CD8-positive, alpha-beta T cell (primary cell): ENCODE measurements at regions of chr14 and their contacts with region 1.

Region 1: DNA sequence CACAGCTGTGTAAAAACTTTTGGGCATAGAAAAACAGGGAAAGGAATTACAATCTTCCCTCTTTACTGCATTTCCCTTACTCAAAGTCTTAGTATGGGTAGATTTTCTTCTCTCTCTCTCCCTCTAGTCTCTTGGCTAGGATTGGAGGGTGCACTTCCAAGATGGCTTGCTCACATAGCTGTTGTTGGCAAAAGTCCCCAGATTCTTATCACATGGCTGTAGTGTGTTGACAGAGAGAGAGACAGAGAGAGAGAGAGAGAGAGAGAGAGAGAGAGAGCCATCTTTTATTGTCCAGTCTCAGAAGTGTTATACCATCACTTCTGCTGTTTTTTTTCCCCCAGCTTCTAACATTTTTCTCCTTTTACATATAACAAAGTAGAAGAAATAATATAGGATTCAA is 6.3 kb upstream of the OR4E2 start:
- DNase-seq: no peak
- ATAC-seq: no peak
- H3K4me3 ChIP-seq: no peak overlapping the region
- H3K4me3 Mint-ChIP-seq: no peak overlapping the region
- H3K27ac ChIP-seq: no peak overlapping the region
- H3K27ac Mint-ChIP-seq: no peak overlapping the region
- H3K4me1 ChIP-seq: no peaks in the 10 kb centered on the region
- H3K4me1 Mint-ChIP-seq: no peaks in the 10 kb centered on the region
- H3K27me3 ChIP-seq: peaks cover 0 to 4% of the 10 kb centered on the region in 2 experiments
- H3K27me3 Mint-ChIP-seq: peaks cover 27% of the 10 kb centered on the region
- CTCF ChIP-seq: no peak

Region 2: GRCh38 chr14:21233457-21234076 is 413.8 kb before region 1 on chr14:
- CTCF ChIA-PET with region 1: no interaction called
- POLR2A ChIA-PET with region 1: no interaction called
- intact Hi-C with region 1: no loop called
- DNase-seq: peak in 2 of 9 experiments; percentile 46 to 57
- ATAC-seq: no peak
- H3K4me3 ChIP-seq: no peak overlapping the region
- H3K4me3 Mint-ChIP-seq: peak overlapping the region; percentile 63
- H3K27ac ChIP-seq: peak overlapping the region in 1 of 2 experiments; percentile 34
- H3K27ac Mint-ChIP-seq: peak overlapping the region; percentile 84
- H3K4me1 ChIP-seq: peaks cover 93% of the 10 kb centered on the region
- H3K4me1 Mint-ChIP-seq: peaks cover 88% of the 10 kb centered on the region
- H3K27me3 ChIP-seq: no peaks in the 10 kb centered on the region
- H3K27me3 Mint-ChIP-seq: no peaks in the 10 kb centered on the region
- CTCF ChIP-seq: no peak

Region 3: GRCh38 chr14:21612324-21612723 is 35.1 kb before region 1 on chr14:
- CTCF ChIA-PET with region 1: no interaction called
- POLR2A ChIA-PET with region 1: no interaction called
- intact Hi-C with region 1: no loop called
- DNase-seq: peak in 2 of 9 experiments; percentile 7 to 27
- ATAC-seq: no peak
- H3K4me3 ChIP-seq: no peak overlapping the region
- H3K4me3 Mint-ChIP-seq: no peak overlapping the region
- H3K27ac ChIP-seq: no peak overlapping the region
- H3K27ac Mint-ChIP-seq: no peak overlapping the region
- H3K4me1 ChIP-seq: no peaks in the 10 kb centered on the region
- H3K4me1 Mint-ChIP-seq: no peaks in the 10 kb centered on the region
- H3K27me3 ChIP-seq: no peaks in the 10 kb centered on the region
- H3K27me3 Mint-ChIP-seq: peaks cover 23% of the 10 kb centered on the region
- CTCF ChIP-seq: no peak

Region 4: DNA sequence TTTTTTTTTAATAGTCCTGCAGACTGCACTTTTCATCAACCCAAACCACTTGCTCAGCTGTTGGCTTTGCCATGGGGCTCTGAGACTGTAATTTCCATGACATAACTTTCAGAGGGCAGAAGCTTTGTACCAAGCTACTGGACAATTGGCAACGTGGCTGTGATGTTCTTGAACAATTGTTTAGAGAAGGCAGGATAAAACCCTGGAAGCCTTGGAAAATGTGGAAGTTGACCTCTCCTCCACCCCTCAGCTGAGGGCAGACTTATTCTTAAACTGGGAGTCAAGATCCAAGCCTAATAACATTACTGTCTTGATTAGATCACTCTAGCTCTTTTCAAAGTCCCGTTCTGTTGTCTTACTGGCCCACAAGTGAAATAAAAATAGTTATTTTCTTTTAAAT is 24.0 kb after region 1 on chr14:
- CTCF ChIA-PET with region 1: interaction called, 4 read pairs
- POLR2A ChIA-PET with region 1: no interaction called
- intact Hi-C with region 1: loop called in 1 of 2 experiments (anchors 1 kb)
- DNase-seq: no peak
- ATAC-seq: no peak
- H3K4me3 ChIP-seq: no peak overlapping the region
- H3K4me3 Mint-ChIP-seq: no peak overlapping the region
- H3K27ac ChIP-seq: no peak overlapping the region
- H3K27ac Mint-ChIP-seq: no peak overlapping the region
- H3K4me1 ChIP-seq: no peaks in the 10 kb centered on the region
- H3K4me1 Mint-ChIP-seq: no peaks in the 10 kb centered on the region
- H3K27me3 ChIP-seq: peaks cover 0 to 3% of the 10 kb centered on the region in 2 experiments
- H3K27me3 Mint-ChIP-seq: peaks cover 17% of the 10 kb centered on the region
- CTCF ChIP-seq: no peak